AG04449 (cell line): ENCODE measurements at regions of chr5 and their contacts with region 1.

Region 1: GRCh38 chr5:146458894-146459293 is 11.8 kb downstream of the TCERG1 start:
- DNase-seq: no peak
- H3K4me3 ChIP-seq: no peak overlapping the region
- CTCF ChIP-seq: no peak

Region 2: DNA sequence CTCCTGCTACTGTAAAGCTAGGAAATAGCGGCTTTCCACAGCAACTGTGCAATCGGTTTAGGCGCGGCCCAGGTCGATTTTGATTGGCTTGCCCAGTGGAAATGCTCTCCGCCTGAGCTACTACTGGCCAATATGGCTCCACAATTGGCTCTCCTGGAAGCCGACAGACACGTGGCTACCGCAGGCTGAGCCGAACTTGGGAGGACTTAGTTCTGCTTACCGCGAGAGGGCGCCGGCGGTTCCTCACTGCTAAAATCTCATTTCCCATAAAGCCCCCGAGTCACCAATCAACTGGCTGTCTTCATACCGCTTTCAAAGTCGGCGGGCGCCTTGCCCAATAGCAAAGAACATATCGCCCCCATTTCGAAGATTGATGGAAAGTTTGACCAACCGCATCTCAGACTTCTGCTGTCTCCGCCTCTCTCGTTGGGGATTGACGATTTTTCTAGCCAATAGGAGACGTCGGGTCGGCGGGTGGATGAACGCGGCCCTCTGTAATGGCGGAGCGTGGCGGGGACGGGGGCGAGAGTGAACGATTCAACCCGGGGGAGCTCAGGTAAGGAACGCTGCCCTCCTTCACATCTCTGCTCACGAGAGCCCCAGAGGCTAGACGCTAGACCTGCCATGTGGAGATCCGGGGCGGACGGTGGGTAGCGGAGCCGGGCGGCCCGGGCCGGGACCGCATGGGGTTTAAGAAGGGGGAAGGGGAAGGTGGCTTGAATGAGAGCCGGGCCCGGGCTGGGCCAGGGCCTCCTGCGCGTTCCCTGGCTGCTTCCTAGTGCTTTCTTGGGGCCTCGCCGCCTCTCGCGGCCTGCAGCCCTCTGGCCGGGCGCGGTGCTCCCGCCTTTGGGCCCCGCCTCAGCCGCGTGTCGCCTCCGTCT is 11.8 kb before region 1 on chr5 and contains the start of gene TCERG1:
- CTCF ChIA-PET with region 1: interaction called, 31 read pairs
- POLR2A ChIA-PET with region 1: interaction called, 3 read pairs
- DNase-seq: peak; percentile 100
- H3K4me3 ChIP-seq: peak within 1 kb of the TSS; percentile 72
- CTCF ChIP-seq: peak; percentile 86

Region 3: DNA sequence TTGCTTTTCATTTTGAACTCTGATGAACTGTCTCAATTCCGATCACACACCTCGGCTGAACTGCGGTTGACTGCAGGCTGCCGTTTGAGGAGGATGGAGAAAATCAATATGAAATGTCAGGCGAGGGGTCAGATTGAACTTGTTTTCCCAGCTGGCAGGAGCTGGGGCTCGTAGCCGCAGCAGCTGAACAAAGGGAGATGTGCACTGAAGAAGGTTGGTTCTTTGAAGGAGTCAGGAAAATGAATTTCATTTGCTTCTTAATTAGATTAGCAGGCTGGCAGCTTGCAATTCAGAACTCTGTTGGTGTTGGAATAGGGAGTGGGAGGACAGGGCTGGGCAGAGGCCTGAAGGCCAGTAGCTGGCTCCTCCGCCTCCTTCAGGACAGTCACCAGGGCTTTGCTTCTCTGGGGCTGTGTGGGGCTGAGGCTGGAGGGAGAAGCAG is 174.4 kb after region 1 on chr5:
- CTCF ChIA-PET with region 1: no interaction called
- POLR2A ChIA-PET with region 1: no interaction called
- DNase-seq: no peak
- H3K4me3 ChIP-seq: no peak overlapping the region
- CTCF ChIP-seq: no peak